Left lung (tissue), 14 donors: ENCODE measurements at regions of chr3 and their contacts with region 1.

Region 1: DNA sequence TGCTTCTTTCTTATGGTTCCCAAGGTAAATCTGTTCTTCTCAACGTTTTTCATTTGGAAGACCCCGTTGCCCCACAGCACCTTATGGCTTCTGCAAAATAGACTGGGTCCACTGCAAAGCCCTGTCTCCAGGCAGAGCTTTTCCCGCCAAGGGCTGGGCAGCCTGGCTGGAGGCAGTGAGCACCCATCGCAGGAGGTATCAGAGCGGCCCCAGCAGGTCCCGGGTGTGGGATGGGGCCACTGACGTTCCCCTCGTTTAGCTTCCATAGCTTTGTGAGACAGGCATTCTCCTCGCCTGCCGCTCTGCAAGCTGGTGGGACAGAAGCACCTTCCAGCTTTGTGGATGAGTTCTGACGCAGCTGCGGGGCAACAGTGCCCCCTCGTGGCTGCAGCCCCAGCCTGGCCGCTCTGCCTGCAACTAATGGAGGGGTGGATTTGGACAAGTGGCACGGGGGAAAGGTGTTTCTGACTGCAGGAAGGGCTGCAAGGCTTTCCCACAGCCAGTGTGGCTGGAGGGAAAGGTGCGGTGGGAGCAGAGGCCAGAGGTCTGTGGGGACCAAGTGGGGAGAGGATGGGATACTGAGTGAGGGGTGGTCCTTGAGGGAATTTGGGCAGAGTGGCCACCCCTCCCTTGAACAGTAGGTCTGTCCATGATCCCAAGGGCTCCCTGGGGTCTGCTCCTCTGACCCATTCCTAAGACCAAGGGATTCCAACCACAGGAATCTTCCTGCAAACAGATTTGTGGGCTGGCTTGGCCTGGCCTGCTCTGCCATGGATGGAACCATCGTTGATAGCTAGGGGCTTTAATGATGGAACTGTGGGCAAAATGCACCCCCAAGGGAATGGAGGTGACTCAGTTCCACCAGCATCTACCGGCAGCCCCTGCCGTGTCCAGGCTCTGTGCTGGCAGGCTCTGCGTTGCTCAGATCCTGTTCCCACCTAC is 99.4 kb downstream of the FBLN2 start:
- DNase-seq: peak; percentile 64 to 91 (median 78)
- ATAC-seq: peak; percentile 83
- H3K4me3 ChIP-seq: no peak overlapping the region
- H3K27ac ChIP-seq: no peak overlapping the region
- H3K4me1 ChIP-seq: peaks cover 4 to 20% of the 10 kb centered on the region in 2 donors
- H3K27me3 ChIP-seq: peaks cover 9 to 46% of the 10 kb centered on the region in 2 donors
- CTCF ChIP-seq: peak; percentile 93

Region 2: DNA sequence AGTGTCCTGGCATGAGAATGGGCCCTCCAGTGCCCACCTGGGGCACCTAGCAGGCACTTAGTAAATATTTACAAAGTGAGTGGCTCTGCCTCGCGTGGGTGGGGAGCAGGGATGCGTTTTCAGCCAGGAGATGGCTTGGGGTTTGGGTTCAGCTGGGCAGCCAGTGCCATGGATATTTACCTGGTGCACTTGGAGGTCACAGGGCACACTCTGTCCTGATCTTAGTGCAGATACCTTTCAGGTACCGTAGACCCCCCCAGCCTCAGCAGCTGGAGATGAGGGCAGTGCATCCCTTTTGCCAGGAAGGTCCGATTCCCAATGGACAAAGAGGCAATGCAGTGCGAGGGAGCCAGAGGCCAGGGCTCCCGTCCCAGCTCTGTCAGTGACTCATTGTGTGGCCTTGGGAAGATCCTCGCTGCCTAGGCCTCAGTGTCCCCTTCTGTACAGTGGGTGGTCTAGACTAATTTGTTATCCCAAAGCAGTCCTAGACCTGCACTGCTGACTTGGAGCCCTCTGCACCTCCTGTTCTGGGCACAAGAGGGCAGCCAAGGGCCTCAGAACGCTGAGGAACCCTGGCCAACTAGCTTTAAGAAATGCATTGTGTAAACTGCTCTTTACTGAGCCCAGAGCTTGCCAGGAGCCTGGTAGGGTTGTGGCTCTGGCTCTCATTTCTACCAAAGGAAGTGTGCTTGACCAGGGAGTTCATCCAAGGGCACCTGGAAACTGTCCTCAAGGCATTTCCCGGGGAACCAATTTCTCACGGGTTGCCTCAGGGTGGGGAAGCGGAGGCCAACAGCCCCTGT is 152.2 kb before region 1 on chr3:
- intact Hi-C with region 1: loop called (anchors 2 to 10 kb)
- DNase-seq: peak; percentile 58 to 90 (median 75)
- ATAC-seq: peak; percentile 97
- H3K4me3 ChIP-seq: no peak overlapping the region
- H3K27ac ChIP-seq: no peak overlapping the region
- H3K4me1 ChIP-seq: peaks cover 0 to 7% of the 10 kb centered on the region in 2 donors
- H3K27me3 ChIP-seq: no peaks in the 10 kb centered on the region
- CTCF ChIP-seq: peak; percentile 87 to 88